OCI-LY7 (cell line): ENCODE measurements at regions of chr17 and their contacts with region 1.

Region 1: DNA sequence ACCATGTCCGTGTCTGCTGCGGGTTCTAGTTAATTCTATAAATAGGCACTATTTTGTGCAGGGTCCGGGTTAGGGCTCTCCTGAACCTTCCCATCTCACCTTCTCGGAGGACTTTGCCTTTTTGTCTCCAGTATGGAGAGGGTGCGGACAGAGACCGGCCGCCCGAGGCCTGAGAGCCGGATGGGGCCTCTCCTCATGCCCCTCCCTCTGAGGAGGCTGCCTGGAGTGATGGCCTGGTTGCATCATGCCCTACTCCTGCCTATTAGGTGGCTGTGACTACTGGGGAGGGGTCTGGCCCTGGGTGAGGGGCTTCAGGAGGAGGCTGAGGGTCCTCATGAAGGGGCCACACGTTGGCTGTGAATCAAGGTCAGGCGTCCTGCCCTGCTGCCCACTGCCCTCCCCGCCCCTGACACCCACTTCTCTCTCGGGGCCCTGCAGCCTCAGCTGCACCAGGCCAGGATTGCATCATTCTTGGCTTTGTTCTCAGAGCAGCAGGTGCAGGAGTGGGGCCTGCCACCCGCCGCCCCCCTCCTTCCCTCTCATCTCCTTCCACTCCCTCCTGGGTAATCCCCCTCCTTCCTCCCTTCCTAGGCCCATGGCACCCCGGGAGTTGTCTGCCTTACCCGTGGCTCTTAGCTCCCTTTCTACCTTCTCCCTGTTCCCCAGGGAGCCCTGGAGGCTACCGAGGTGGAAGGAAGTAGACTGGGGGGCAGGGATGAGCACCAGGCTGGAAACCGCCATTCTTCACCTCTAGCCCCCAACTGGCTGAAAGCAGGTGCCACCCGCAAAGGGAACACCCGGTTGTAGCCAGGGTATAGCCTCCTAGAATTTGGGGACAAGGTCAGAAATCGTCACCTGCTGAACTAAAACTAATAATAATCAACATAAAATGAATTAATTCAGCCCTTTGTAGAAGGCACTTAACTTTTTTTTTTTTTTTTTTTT is 12.7 kb upstream of the ARHGAP23 start:
- DNase-seq: peak; percentile 95
- H3K4me3 ChIP-seq: peak overlapping the region; percentile 64
- H3K27ac ChIP-seq: peak overlapping the region; percentile 91
- H3K4me1 ChIP-seq: peaks cover 62% of the 10 kb centered on the region
- CTCF ChIP-seq: peak; percentile 23; the same call in 1 of the 2 replicates

Region 2: DNA sequence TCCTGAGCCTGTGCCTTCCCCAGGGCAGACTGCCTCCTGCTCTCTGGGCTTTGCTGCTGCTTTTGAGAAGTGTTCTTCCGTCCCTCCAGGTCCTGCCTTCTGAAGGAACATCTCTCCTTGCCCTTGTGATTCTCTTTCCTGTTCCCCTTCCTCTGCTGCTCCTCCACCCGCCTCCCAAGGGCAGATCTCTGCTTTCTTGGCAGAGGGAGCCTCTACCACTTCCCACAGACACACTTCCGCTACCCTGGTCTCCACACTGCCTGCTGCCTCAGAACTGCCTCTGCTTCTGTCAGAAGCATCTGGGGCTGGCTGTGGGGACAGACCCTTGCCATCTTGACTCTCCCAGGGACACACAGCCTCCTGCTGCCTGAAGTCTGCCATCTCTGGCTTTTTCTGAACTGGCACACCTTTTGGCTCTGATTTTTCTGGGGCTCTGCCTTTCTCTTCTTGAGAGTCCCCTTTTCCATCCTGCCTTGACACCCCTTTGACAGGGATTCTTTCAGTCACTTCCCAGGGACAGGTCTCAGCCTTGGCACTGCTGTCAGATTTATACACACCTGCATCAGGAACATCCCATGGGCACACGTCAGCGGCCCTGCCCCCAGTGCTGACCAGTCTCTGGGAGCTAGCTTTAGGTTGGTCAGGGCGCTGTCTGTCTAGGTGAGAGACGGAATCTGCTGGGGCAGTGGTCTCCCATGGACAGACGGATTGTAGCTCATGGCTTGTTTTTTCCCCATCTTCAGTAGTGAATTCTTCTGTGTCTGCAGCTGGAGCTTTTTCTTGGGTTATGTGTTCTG is 88.3 kb before region 1 on chr17:
- CTCF ChIA-PET with region 1: interaction called, 4 read pairs
- POLR2A ChIA-PET with region 1: interaction called, 5 read pairs
- intact Hi-C with region 1: loop called (anchors 2 kb)
- DNase-seq: peak; percentile 75
- H3K4me3 ChIP-seq: peak overlapping the region; percentile 48
- H3K27ac ChIP-seq: peak overlapping the region; percentile 97
- H3K4me1 ChIP-seq: peaks cover 72% of the 10 kb centered on the region
- CTCF ChIP-seq: no peak

Region 3: DNA sequence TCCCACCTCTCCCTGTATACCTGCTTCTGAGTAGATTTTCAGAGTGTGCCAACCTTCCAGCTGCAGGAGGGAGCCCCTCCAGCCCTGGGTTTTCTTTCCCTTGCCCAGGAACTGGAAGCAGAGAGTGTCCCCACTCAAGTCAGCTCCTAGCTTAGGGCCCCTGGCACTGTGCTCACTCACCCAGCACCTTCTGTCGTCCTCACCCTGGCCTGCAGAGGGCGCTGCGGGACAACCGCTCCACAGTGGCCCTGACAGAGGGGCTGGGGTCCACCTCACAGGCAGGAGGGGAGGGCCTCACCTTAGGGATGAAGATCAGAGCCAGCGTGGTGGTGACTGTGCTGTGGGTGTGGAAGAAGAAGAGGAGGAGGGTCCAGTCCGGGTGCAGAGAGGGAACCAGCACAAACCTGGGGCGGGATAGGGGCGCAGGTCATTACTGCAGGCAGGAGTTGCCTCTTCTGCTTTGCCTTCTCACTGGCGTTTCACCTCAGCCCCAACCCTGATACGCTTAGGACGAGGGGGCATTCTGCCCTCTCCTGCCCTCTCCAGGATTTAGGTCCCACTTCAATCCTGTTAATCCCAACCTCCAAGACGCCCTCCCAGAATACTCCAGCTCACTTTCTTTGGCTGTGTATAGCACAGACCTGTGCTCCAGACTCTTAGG is 81.8 kb before region 1 on chr17:
- CTCF ChIA-PET with region 1: interaction called, 3 read pairs
- POLR2A ChIA-PET with region 1: interaction called, 3 read pairs
- intact Hi-C with region 1: loop called (anchors 1 kb)
- DNase-seq: peak; percentile 72
- H3K4me3 ChIP-seq: no peak overlapping the region
- H3K27ac ChIP-seq: no peak overlapping the region
- H3K4me1 ChIP-seq: peaks cover 7% of the 10 kb centered on the region
- CTCF ChIP-seq: peak; percentile 96

Region 4: GRCh38 chr17:38351412-38352222 is 63.9 kb before region 1 on chr17 and contains the start of gene SOCS7:
- CTCF ChIA-PET with region 1: interaction called, 30 read pairs
- POLR2A ChIA-PET with region 1: interaction called, 11 read pairs
- intact Hi-C with region 1: loop called (anchors 1 kb)
- DNase-seq: peak; percentile 93
- H3K4me3 ChIP-seq: peak within 1 kb of the TSS; percentile 89
- H3K27ac ChIP-seq: peak within 1 kb of the TSS; percentile 35
- H3K4me1 ChIP-seq: peaks cover 48% of the 10 kb centered on the region
- CTCF ChIP-seq: no peak
- total RNA-seq, gene SOCS7: 27.0 and 36.1 TPM in 2 replicates

Region 5: GRCh38 chr17:38369124-38369886 is 46.2 kb before region 1 on chr17:
- CTCF ChIA-PET with region 1: no interaction called
- POLR2A ChIA-PET with region 1: no interaction called
- intact Hi-C with region 1: no loop called
- DNase-seq: no peak
- H3K4me3 ChIP-seq: no peak overlapping the region
- H3K27ac ChIP-seq: no peak overlapping the region
- H3K4me1 ChIP-seq: no peaks in the 10 kb centered on the region
- CTCF ChIP-seq: no peak

Region 6: GRCh38 chr17:38485146-38485468 is 69.6 kb after region 1 on chr17:
- CTCF ChIA-PET with region 1: no interaction called
- POLR2A ChIA-PET with region 1: no interaction called
- intact Hi-C with region 1: loop called (anchors 2 kb)
- DNase-seq: no peak
- H3K4me3 ChIP-seq: no peak overlapping the region
- H3K27ac ChIP-seq: peak overlapping the region; percentile 68
- H3K4me1 ChIP-seq: peaks cover 14% of the 10 kb centered on the region
- CTCF ChIP-seq: peak; percentile 5; the same call in 1 of the 2 replicates

Region 7: GRCh38 chr17:38507436-38507835 is 91.9 kb after region 1 on chr17:
- CTCF ChIA-PET with region 1: no interaction called
- POLR2A ChIA-PET with region 1: no interaction called
- intact Hi-C with region 1: no loop called
- DNase-seq: no peak
- H3K4me3 ChIP-seq: no peak overlapping the region
- H3K27ac ChIP-seq: no peak overlapping the region
- H3K4me1 ChIP-seq: no peaks in the 10 kb centered on the region
- CTCF ChIP-seq: no peak